PC-9 (cell line): ENCODE measurements at regions of chr17 and their contacts with region 1.

Region 1: GRCh38 chr17:45135192-45135977 is at the start of gene ACBD4:
- DNase-seq: peak; percentile 95 to 96
- H3K4me3 ChIP-seq: peak within 1 kb of the TSS; percentile 70
- H3K27ac ChIP-seq: no peak within 1 kb of the TSS
- H3K4me1 ChIP-seq: peaks cover 22% of the 10 kb centered on the region
- H3K27me3 ChIP-seq: no peaks in the 10 kb centered on the region
- CTCF ChIP-seq: peak; percentile 100
- total RNA-seq, gene ACBD4: 14.6 and 19.5 TPM in 2 replicates

Region 2: GRCh38 chr17:44775136-44775837 is 360.1 kb before region 1 on chr17:
- CTCF ChIA-PET with region 1: interaction called, 11 read pairs
- POLR2A ChIA-PET with region 1: no interaction called
- intact Hi-C with region 1: loop called (anchors 1 kb)
- DNase-seq: peak in 1 of 2 experiments; percentile 95
- H3K4me3 ChIP-seq: peak overlapping the region; percentile 81
- H3K27ac ChIP-seq: no peak overlapping the region
- H3K4me1 ChIP-seq: peaks cover 8% of the 10 kb centered on the region; the same call in 1 of the 2 replicates
- H3K27me3 ChIP-seq: no peaks in the 10 kb centered on the region
- CTCF ChIP-seq: peak; percentile 21; the same call in 1 of the 2 replicates

Region 3: DNA sequence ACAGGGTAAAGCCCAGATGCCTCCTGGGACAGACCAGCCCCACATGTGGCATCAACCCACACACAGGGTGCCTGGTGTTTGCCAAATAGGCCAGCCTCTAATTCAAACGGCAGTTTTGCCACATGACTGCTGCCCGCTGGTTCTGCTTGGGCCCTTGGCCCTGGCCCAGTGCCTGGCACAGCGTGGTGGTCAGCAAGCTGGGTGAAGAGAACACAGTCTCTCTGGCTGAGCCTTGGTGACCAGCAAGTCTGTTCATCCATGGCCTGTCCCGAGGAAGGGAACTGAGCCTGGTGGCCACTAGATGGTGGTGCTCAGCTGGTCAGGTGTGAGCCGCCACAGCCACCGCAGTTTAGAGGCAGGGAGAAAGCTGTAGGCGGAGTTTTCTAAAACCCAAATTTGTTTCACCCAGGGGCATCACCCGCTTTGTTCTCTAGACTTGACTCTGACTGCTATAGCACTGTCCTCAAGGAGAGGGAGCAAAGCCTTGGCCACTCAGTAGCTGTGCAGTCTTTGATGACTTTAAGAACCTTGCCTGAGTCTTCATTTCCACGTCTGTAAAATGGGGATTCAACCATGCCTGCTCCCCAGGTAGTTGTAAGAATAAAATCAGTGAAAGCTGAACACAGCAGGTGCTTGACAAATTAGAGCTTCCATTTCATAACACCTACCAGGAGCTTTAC is 215.4 kb before region 1 on chr17:
- CTCF ChIA-PET with region 1: interaction called, 3 read pairs
- POLR2A ChIA-PET with region 1: interaction called, 3 read pairs
- intact Hi-C with region 1: loop called (anchors 5 kb)
- DNase-seq: peak; percentile 64 to 74
- H3K4me3 ChIP-seq: no peak overlapping the region
- H3K27ac ChIP-seq: no peak overlapping the region
- H3K4me1 ChIP-seq: peaks cover 9% of the 10 kb centered on the region
- H3K27me3 ChIP-seq: peaks cover 8% of the 10 kb centered on the region; the same call in 1 of the 2 replicates
- CTCF ChIP-seq: peak; percentile 83

Region 4: DNA sequence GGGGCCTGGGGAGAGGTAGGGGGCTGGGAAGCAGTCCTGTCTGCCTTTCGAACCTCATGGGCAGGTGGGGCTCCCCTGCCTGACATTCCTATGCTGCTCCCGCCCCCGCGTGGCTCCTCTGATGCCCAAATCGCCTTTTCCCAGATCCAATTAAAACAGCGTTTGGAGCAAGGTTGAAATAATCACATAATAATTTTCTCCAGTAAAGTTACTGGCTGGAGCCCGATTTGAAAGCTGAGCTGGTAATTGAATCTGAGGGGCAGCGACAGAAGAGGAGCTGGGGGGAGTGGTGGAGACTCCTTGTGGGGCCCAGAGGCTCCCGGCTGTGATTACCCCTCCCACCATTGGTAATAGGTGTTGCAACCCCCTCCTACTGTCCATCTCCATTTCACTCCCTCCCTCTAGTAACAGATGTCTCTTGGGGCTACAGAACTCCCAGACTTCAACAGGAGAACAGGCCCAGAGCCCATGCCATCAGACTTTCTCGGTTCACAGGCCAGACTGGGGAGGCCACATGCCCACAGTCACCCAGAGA is 128.4 kb before region 1 on chr17:
- CTCF ChIA-PET with region 1: no interaction called
- POLR2A ChIA-PET with region 1: no interaction called
- intact Hi-C with region 1: no loop called
- DNase-seq: no peak
- H3K4me3 ChIP-seq: no peak overlapping the region
- H3K27ac ChIP-seq: no peak overlapping the region
- H3K4me1 ChIP-seq: no peaks in the 10 kb centered on the region
- H3K27me3 ChIP-seq: peaks cover 12% of the 10 kb centered on the region; the same call in 1 of the 2 replicates
- CTCF ChIP-seq: no peak

Region 5: GRCh38 chr17:45051060-45051719 is 84.2 kb before region 1 on chr17 and contains the start of gene DCAKD:
- CTCF ChIA-PET with region 1: no interaction called
- POLR2A ChIA-PET with region 1: no interaction called
- intact Hi-C with region 1: loop called (anchors 5 kb)
- DNase-seq: peak; percentile 88 to 95
- H3K4me3 ChIP-seq: peak within 1 kb of the TSS; percentile 98
- H3K27ac ChIP-seq: peak within 1 kb of the TSS; percentile 92
- H3K4me1 ChIP-seq: peaks cover 26% of the 10 kb centered on the region
- H3K27me3 ChIP-seq: no peaks in the 10 kb centered on the region
- CTCF ChIP-seq: no peak
- total RNA-seq, gene DCAKD: 57.9 and 68.8 TPM in 2 replicates

Region 6: GRCh38 chr17:45155029-45155428 is 19.6 kb after region 1 on chr17:
- CTCF ChIA-PET with region 1: interaction called, 46 read pairs
- POLR2A ChIA-PET with region 1: no interaction called
- intact Hi-C with region 1: no loop called
- DNase-seq: peak in 1 of 2 experiments; percentile 74
- H3K4me3 ChIP-seq: peak overlapping the region; percentile 36; the same call in 1 of the 2 replicates
- H3K27ac ChIP-seq: peak overlapping the region; percentile 75
- H3K4me1 ChIP-seq: peaks cover 72% of the 10 kb centered on the region
- H3K27me3 ChIP-seq: no peaks in the 10 kb centered on the region
- CTCF ChIP-seq: 0 out of 2 replicates have a peak, but pooled peaks have one; percentile 21

Region 7: GRCh38 chr17:45197555-45198334 is 62.4 kb after region 1 on chr17:
- CTCF ChIA-PET with region 1: interaction called, 32 read pairs
- POLR2A ChIA-PET with region 1: no interaction called
- intact Hi-C with region 1: loop called (anchors 1 kb)
- DNase-seq: peak; percentile 83 to 97
- H3K4me3 ChIP-seq: no peak overlapping the region
- H3K27ac ChIP-seq: peak overlapping the region; percentile 52
- H3K4me1 ChIP-seq: peaks cover 36% of the 10 kb centered on the region
- H3K27me3 ChIP-seq: no peaks in the 10 kb centered on the region
- CTCF ChIP-seq: peak; percentile 99

Region 8: DNA sequence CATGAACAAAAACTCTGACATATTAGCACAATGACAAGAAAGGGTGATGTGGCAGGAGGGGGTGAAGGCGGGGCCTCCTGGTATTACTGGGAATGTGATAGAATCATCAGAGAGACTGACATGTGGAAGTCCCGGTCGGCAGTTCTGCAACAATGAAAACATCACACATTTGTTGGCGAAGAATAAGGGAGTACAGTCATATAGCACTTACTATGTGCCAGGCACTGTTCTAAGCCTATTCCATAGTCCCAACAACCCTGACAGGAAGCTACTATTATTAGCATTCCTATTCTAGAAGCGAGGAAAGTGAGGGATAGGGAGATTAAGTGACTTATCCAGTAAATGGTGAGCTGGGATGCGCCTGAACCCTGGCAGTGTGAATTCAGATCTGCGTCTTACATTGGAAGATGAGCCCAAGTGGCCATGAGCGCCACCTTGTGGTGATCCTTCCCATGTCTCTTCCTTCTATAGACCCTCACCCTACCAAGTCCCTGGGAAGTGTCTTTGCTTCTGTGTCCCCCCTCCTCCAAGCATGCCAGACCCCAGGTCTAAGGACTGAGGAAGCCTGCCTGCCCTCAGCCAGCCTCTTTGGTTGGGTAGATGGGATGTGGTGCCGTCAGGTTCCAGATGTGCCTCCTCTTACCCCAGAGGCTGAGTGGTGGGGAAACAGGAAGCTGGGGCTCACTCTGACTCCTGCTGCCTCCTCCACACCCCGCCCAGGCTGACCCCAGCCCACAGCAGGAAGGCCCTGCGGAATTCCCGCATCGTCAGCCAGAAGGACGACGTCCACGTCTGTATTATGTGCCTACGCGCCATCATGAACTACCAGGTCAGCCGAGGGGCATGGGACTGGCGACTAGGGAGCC is 100.3 kb after region 1 on chr17:
- CTCF ChIA-PET with region 1: interaction called, 31 read pairs
- POLR2A ChIA-PET with region 1: no interaction called
- intact Hi-C with region 1: loop called (anchors 1 kb)
- DNase-seq: peak in 1 of 2 experiments; percentile 60
- H3K4me3 ChIP-seq: no peak overlapping the region
- H3K27ac ChIP-seq: no peak overlapping the region
- H3K4me1 ChIP-seq: peaks cover 12% of the 10 kb centered on the region
- H3K27me3 ChIP-seq: no peaks in the 10 kb centered on the region
- CTCF ChIP-seq: peak; percentile 92

Region 9: DNA sequence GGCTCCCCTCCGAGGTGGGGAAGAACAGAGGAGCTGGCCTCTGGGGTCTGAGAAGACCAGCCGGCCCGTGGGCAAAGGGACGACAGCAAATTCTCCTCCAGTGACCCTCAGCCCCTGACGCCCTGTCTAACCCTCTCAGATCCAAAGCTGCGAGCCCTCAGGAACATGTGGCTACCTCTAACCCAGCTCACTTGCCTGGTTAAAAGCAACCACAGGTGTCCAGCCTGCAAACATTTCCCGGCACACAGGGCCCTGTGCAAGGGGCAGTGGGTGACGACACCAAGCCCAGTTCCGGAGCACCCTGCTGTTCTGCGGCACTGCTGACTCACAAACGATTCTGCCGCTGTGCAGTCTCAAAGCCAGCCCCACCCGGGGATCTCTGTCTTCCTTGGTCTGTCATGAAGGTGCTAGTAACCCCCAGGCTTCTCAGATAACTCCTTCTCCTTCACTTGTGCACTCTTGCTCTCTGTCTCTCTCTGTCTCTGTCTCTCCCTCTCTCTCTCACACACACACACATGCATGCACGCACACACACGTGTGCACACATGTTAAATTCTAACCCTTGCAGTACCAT is 1660.1 kb after region 1 on chr17:
- CTCF ChIA-PET with region 1: no interaction called
- POLR2A ChIA-PET with region 1: no interaction called
- intact Hi-C with region 1: no loop called
- DNase-seq: peak; percentile 75 to 96
- H3K4me3 ChIP-seq: peak overlapping the region; percentile 37; the same call in 1 of the 2 replicates
- H3K27ac ChIP-seq: peak overlapping the region; percentile 89
- H3K4me1 ChIP-seq: peaks cover 40% of the 10 kb centered on the region
- H3K27me3 ChIP-seq: no peaks in the 10 kb centered on the region
- CTCF ChIP-seq: no peak